ENCODE measurements at regions of chr12 and their contacts with region 1.

Region 1: GRCh38 chr12:46342562-46343033 is 30.0 kb downstream of the SLC38A2 start:
- DNase-seq: peak in 7 of 9 donors; percentile 17 to 53 (median 40)
- ATAC-seq: peak; percentile 65
- H3K4me3 ChIP-seq: no peak overlapping the region
- H3K4me3 Mint-ChIP-seq: no peak overlapping the region
- H3K27ac ChIP-seq: no peak overlapping the region
- H3K27ac Mint-ChIP-seq: peak overlapping the region in 2 of 9 donors; percentile 22 to 51
- H3K4me1 ChIP-seq: no peaks in the 10 kb centered on the region
- H3K4me1 Mint-ChIP-seq: peaks cover 0 to 4% (median 0%) of the 10 kb centered on the region in 7 donors
- H3K27me3 ChIP-seq: peaks cover 0 to 3% of the 10 kb centered on the region in 2 donors
- H3K27me3 Mint-ChIP-seq: peaks cover 0 to 22% (median 10%) of the 10 kb centered on the region in 5 donors

Region 2: DNA sequence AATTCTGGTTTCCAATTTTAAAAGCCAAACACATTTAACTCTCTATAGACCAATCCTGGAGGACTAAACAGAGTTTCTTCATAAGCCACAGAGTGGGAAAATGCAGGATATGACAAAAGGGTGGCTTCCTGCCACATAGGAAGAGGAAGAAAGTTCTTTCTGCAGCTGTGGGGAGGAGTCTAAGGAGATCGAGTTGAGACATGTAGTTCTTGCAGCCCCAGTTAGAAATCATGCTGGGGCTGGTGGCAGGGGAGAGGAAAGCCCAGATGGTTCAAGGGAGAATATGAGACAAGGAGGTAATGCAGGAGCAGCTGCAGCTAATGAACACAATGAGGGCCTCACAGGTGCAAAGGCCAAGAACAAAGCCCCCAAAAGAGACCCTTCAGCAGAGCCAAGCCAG is 698.1 kb before region 1 on chr12:
- CTCF ChIA-PET with region 1: no interaction called
- POLR2A ChIA-PET with region 1: no interaction called
- intact Hi-C with region 1: no loop called
- DNase-seq: peak in 2 of 9 donors; percentile 2 to 9
- ATAC-seq: peak; percentile 63
- H3K4me3 ChIP-seq: no peak overlapping the region
- H3K4me3 Mint-ChIP-seq: peak overlapping the region in 8 of 10 donors; percentile 14 to 75 (median 63)
- H3K27ac ChIP-seq: no peak overlapping the region
- H3K27ac Mint-ChIP-seq: peak overlapping the region in 7 of 9 donors; percentile 36 to 63 (median 59)
- H3K4me1 ChIP-seq: peaks cover 0 to 10% of the 10 kb centered on the region in 2 donors
- H3K4me1 Mint-ChIP-seq: peaks cover 6 to 15% (median 12%) of the 10 kb centered on the region in 7 donors
- H3K27me3 ChIP-seq: no peaks in the 10 kb centered on the region
- H3K27me3 Mint-ChIP-seq: peaks cover 1 to 11% (median 3%) of the 10 kb centered on the region in 5 donors

Region 3: DNA sequence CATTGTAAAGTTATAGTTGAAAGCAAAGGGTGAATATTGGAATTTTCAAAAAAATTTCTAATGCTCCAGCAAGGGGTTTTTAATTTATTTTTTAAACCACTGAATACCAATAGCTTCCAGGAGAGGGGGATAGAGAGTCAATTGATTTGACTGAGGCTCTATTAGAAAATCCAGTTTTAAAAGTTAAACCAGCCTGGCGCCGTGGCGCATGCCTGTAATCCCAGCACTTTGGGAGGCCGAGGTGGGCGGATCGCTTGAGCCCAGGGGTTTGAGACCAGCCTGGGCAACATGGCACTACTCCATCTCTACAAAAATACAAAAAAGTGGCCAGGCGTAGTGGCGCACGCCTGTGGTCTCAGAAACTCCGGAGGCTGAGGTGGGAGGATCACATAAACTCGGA is 333.1 kb after region 1 on chr12:
- CTCF ChIA-PET with region 1: interaction called, 5 read pairs
- POLR2A ChIA-PET with region 1: no interaction called
- intact Hi-C with region 1: loop called (anchors 1 to 5 kb)
- DNase-seq: peak in 5 of 9 donors; percentile 24 to 38 (median 34)
- ATAC-seq: no peak
- H3K4me3 ChIP-seq: no peak overlapping the region
- H3K4me3 Mint-ChIP-seq: no peak overlapping the region
- H3K27ac ChIP-seq: no peak overlapping the region
- H3K27ac Mint-ChIP-seq: no peak overlapping the region
- H3K4me1 ChIP-seq: no peaks in the 10 kb centered on the region
- H3K4me1 Mint-ChIP-seq: peaks cover 0 to 16% (median 0%) of the 10 kb centered on the region in 7 donors
- H3K27me3 ChIP-seq: no peaks in the 10 kb centered on the region
- H3K27me3 Mint-ChIP-seq: peaks cover 0 to 3% (median 0%) of the 10 kb centered on the region in 5 donors

Region 4: GRCh38 chr12:46933947-46934346 is 591.3 kb after region 1 on chr12:
- CTCF ChIA-PET with region 1: interaction called, 4 read pairs
- POLR2A ChIA-PET with region 1: no interaction called
- intact Hi-C with region 1: loop called (anchors 1 to 5 kb)
- DNase-seq: peak in 3 of 9 donors; percentile 2 to 17 (median 15)
- ATAC-seq: no peak
- H3K4me3 ChIP-seq: no peak overlapping the region
- H3K4me3 Mint-ChIP-seq: no peak overlapping the region
- H3K27ac ChIP-seq: no peak overlapping the region
- H3K27ac Mint-ChIP-seq: no peak overlapping the region
- H3K4me1 ChIP-seq: no peaks in the 10 kb centered on the region
- H3K4me1 Mint-ChIP-seq: peaks cover 0 to 6% (median 0%) of the 10 kb centered on the region in 7 donors
- H3K27me3 ChIP-seq: no peaks in the 10 kb centered on the region
- H3K27me3 Mint-ChIP-seq: peaks cover 5 to 32% (median 16%) of the 10 kb centered on the region in 5 donors

Region 5: DNA sequence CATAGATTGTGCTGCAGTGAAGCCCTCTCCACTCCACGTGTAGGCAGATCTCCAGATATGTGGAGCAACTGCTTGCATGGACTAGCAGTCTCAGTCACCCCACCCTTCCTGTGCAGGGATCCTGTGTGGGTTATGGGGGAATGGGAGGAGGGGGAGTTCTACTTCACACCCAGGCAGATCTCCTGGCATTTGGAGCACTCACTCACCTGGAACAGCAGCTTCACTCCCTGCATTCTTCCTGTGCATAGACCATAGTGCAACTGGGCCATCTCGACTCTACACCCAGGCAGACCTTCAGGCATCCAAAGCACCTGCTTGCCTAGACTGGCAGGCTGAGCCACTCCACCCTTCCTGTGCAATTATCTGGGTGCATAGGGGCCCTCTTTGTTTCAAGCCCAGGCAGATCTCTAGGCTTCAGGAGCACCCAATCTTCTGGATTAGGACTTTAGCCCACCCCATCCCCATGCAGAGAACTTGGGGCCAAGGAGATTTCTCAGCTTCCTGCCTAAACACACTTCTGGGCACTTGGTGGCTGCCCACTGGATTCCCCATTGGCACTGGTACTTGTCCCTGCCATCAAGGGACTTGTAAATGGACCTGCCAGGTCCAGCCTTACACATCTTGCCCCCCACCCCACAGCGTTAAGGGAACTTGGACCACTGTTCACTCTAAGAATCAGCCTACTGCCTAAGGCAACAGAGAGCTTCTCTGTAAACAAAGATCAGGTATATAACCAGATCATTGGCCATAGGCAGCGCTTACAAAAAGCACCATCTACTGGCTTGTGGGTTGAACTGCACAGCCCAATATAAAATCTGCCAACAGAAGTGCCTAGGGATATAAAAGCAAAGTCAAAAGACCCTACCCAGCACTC is 641.0 kb after region 1 on chr12:
- CTCF ChIA-PET with region 1: no interaction called
- POLR2A ChIA-PET with region 1: no interaction called
- intact Hi-C with region 1: loop called in 1 of 2 experiments (anchors 5 kb)
- DNase-seq: peak in 6 of 9 donors; percentile 5 to 54 (median 31)
- ATAC-seq: peak; percentile 74
- H3K4me3 ChIP-seq: no peak overlapping the region
- H3K4me3 Mint-ChIP-seq: peak overlapping the region in 1 of 10 donors; percentile 13
- H3K27ac ChIP-seq: no peak overlapping the region
- H3K27ac Mint-ChIP-seq: peak overlapping the region in 1 of 9 donors; percentile 6
- H3K4me1 ChIP-seq: peaks cover 3 to 8% of the 10 kb centered on the region in 2 donors
- H3K4me1 Mint-ChIP-seq: peaks cover 0 to 10% (median 9%) of the 10 kb centered on the region in 7 donors
- H3K27me3 ChIP-seq: no peaks in the 10 kb centered on the region
- H3K27me3 Mint-ChIP-seq: peaks cover 17 to 29% (median 26%) of the 10 kb centered on the region in 5 donors

Region 6: GRCh38 chr12:47021298-47021697 is 678.7 kb after region 1 on chr12:
- CTCF ChIA-PET with region 1: interaction called, 12 read pairs
- POLR2A ChIA-PET with region 1: no interaction called
- intact Hi-C with region 1: loop called (anchors 1 kb)
- DNase-seq: peak in 7 of 9 donors; percentile 7 to 55 (median 51)
- ATAC-seq: peak; percentile 68
- H3K4me3 ChIP-seq: no peak overlapping the region
- H3K4me3 Mint-ChIP-seq: no peak overlapping the region
- H3K27ac ChIP-seq: no peak overlapping the region
- H3K27ac Mint-ChIP-seq: no peak overlapping the region
- H3K4me1 ChIP-seq: no peaks in the 10 kb centered on the region
- H3K4me1 Mint-ChIP-seq: no peaks in the 10 kb centered on the region
- H3K27me3 ChIP-seq: peaks cover 0 to 3% of the 10 kb centered on the region in 2 donors
- H3K27me3 Mint-ChIP-seq: peaks cover 4 to 31% (median 10%) of the 10 kb centered on the region in 5 donors

Region 7: DNA sequence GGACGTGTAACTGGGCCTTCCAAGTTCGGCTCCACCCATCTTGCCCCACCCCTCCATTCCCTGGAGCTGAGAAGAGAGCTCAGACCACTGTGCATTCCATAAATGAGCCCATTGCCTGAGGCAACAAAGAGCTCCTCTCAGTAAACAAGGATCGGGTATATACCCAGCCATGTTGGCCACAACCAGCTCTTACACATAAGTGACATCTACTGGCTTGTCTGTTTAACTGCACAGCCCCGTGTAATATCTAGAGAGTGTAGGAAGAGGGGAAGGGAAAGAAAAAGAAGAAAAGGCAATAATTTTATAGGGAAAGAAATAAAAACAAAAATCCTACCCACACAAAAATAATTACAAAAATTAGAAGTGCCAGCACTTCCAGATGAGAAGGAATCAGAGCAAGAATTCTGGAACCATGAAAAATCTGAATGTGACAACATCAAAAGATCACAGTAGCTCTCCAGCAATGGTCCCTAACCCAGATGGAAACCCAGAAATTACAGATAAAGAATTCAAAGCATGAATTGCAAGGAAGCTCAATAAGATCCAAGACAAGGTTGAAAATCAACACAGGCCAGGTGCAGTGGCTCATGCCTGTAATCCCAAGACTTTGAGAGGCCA is 1055.2 kb after region 1 on chr12:
- CTCF ChIA-PET with region 1: no interaction called
- POLR2A ChIA-PET with region 1: no interaction called
- intact Hi-C with region 1: loop called in 1 of 2 experiments (anchors 10 kb)
- DNase-seq: peak in 8 of 9 donors; percentile 33 to 71 (median 54)
- ATAC-seq: peak; percentile 86
- H3K4me3 ChIP-seq: peak overlapping the region; percentile 20
- H3K4me3 Mint-ChIP-seq: peak overlapping the region; percentile 29 to 73 (median 64)
- H3K27ac ChIP-seq: no peak overlapping the region
- H3K27ac Mint-ChIP-seq: peak overlapping the region; percentile 61 to 98 (median 91)
- H3K4me1 ChIP-seq: peaks cover 41% of the 10 kb centered on the region in 2 donors
- H3K4me1 Mint-ChIP-seq: peaks cover 28 to 76% (median 52%) of the 10 kb centered on the region in 7 donors
- H3K27me3 ChIP-seq: no peaks in the 10 kb centered on the region
- H3K27me3 Mint-ChIP-seq: no peaks in the 10 kb centered on the region

Region 8: GRCh38 chr12:47686645-47687240 is 1344.1 kb after region 1 on chr12:
- CTCF ChIA-PET with region 1: no interaction called
- POLR2A ChIA-PET with region 1: no interaction called
- intact Hi-C with region 1: loop called in 1 of 2 experiments (anchors 5 kb)
- DNase-seq: peak in 7 of 9 donors; percentile 21 to 53 (median 43)
- ATAC-seq: peak; percentile 76
- H3K4me3 ChIP-seq: no peak overlapping the region
- H3K4me3 Mint-ChIP-seq: no peak overlapping the region
- H3K27ac ChIP-seq: no peak overlapping the region
- H3K27ac Mint-ChIP-seq: no peak overlapping the region
- H3K4me1 ChIP-seq: peaks cover 0 to 3% of the 10 kb centered on the region in 2 donors
- H3K4me1 Mint-ChIP-seq: peaks cover 9 to 19% (median 14%) of the 10 kb centered on the region in 7 donors
- H3K27me3 ChIP-seq: no peaks in the 10 kb centered on the region
- H3K27me3 Mint-ChIP-seq: no peaks in the 10 kb centered on the region

Measured in naive thymus-derived CD4-positive, alpha-beta T cell (primary cell).